T-cell (primary cell): ENCODE measurements at regions of chr6 and their contacts with region 1.

Region 1: DNA sequence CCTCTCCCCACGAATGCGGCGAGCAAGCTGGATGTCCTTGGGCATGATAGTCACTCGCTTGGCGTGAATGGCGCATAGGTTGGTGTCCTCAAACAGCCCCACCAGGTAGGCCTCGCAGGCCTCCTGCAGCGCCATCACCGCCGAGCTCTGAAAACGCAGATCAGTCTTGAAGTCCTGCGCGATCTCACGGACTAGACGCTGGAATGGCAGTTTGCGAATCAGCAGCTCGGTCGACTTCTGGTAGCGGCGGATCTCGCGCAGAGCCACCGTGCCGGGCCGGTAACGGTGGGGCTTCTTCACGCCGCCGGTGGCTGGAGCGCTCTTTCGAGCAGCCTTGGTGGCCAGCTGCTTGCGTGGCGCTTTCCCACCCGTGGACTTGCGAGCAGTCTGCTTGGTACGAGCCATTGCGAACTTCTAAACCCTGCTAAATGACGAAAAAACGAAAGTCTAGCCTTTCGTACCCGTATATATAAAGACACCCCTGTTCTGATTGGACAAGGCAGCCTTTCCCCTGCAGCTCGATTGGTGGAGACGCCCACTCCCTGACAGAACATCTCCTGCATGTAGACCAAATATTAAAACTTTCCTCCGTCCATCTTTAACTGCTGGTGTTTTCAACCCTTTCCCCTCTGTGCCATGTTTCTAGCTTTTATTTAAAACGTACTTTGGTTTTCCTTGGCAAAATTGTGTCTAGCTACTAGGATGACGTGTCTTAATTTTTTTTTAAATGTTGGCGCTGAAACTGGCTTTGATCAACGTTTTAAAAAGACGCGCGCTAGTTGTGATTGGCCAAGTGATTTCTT is 109.8 kb downstream of the HFE start:
- DNase-seq: peak; percentile 55 to 93 (median 81)
- ATAC-seq: peak; percentile 58 to 66 (median 61)
- H3K4me3 ChIP-seq: peak overlapping the region; percentile 79 to 99
- H3K4me3 Mint-ChIP-seq: peak overlapping the region; percentile 95 to 98 (median 97)
- H3K27ac ChIP-seq: peak overlapping the region; percentile 85
- H3K27ac Mint-ChIP-seq: peak overlapping the region; percentile 93 to 98
- H3K4me1 ChIP-seq: peaks cover 13 to 30% of the 10 kb centered on the region in 2 experiments
- H3K4me1 Mint-ChIP-seq: peaks cover 38 to 60% (median 46%) of the 10 kb centered on the region in 3 donors
- H3K27me3 ChIP-seq: no peaks in the 10 kb centered on the region
- H3K27me3 Mint-ChIP-seq: no peaks in the 10 kb centered on the region

Region 2: GRCh38 chr6:25612666-25613065 is 584.4 kb before region 1 on chr6:
- CTCF ChIA-PET with region 1: no interaction called
- POLR2A ChIA-PET with region 1: no interaction called
- DNase-seq: no peak
- ATAC-seq: no peak
- H3K4me3 ChIP-seq: no peak overlapping the region
- H3K4me3 Mint-ChIP-seq: no peak overlapping the region
- H3K27ac ChIP-seq: no peak overlapping the region
- H3K27ac Mint-ChIP-seq: no peak overlapping the region
- H3K4me1 ChIP-seq: no peaks in the 10 kb centered on the region
- H3K4me1 Mint-ChIP-seq: no peaks in the 10 kb centered on the region
- H3K27me3 ChIP-seq: no peaks in the 10 kb centered on the region
- H3K27me3 Mint-ChIP-seq: no peaks in the 10 kb centered on the region

Region 3: GRCh38 chr6:26045065-26045927 is 151.8 kb before region 1 on chr6:
- CTCF ChIA-PET with region 1: no interaction called
- POLR2A ChIA-PET with region 1: interaction called, 9 to 52 read pairs
- DNase-seq: peak; percentile 45 to 90 (median 78)
- ATAC-seq: peak; percentile 63 to 66 (median 64)
- H3K4me3 ChIP-seq: peak overlapping the region; percentile 77 to 83
- H3K4me3 Mint-ChIP-seq: peak overlapping the region; percentile 84 to 91 (median 90)
- H3K27ac ChIP-seq: peak overlapping the region; percentile 90
- H3K27ac Mint-ChIP-seq: peak overlapping the region; percentile 98
- H3K4me1 ChIP-seq: peaks cover 5 to 26% of the 10 kb centered on the region in 2 experiments
- H3K4me1 Mint-ChIP-seq: peaks cover 15 to 27% (median 26%) of the 10 kb centered on the region in 3 donors
- H3K27me3 ChIP-seq: no peaks in the 10 kb centered on the region
- H3K27me3 Mint-ChIP-seq: no peaks in the 10 kb centered on the region

Region 4: GRCh38 chr6:26175428-26176181 is 21.4 kb before region 1 on chr6:
- CTCF ChIA-PET with region 1: interaction called, 3 to 36 read pairs
- POLR2A ChIA-PET with region 1: interaction called, 17 to 53 read pairs
- DNase-seq: peak in 24 of 35 experiments; percentile 30 to 85 (median 50)
- ATAC-seq: no peak
- H3K4me3 ChIP-seq: no peak overlapping the region
- H3K4me3 Mint-ChIP-seq: peak overlapping the region in 1 of 3 donors; percentile 5
- H3K27ac ChIP-seq: peak overlapping the region; percentile 37
- H3K27ac Mint-ChIP-seq: peak overlapping the region; percentile 58 to 73
- H3K4me1 ChIP-seq: peaks cover 11 to 15% of the 10 kb centered on the region in 2 experiments
- H3K4me1 Mint-ChIP-seq: peaks cover 36 to 39% (median 37%) of the 10 kb centered on the region in 3 donors
- H3K27me3 ChIP-seq: no peaks in the 10 kb centered on the region
- H3K27me3 Mint-ChIP-seq: no peaks in the 10 kb centered on the region

Region 5: GRCh38 chr6:26234421-26235296 is 37.6 kb after region 1 on chr6:
- CTCF ChIA-PET with region 1: interaction called in 1 of 2 experiments, 10 read pairs
- POLR2A ChIA-PET with region 1: interaction called, 33 to 154 read pairs
- DNase-seq: peak; percentile 52 to 83 (median 66)
- ATAC-seq: peak; percentile 66 to 78 (median 76)
- H3K4me3 ChIP-seq: peak overlapping the region; percentile 88 to 98
- H3K4me3 Mint-ChIP-seq: peak overlapping the region; percentile 87 to 96 (median 88)
- H3K27ac ChIP-seq: peak overlapping the region; percentile 95
- H3K27ac Mint-ChIP-seq: peak overlapping the region; percentile 96 to 100
- H3K4me1 ChIP-seq: peaks cover 13 to 19% of the 10 kb centered on the region in 2 experiments
- H3K4me1 Mint-ChIP-seq: peaks cover 32 to 39% (median 36%) of the 10 kb centered on the region in 3 donors
- H3K27me3 ChIP-seq: no peaks in the 10 kb centered on the region
- H3K27me3 Mint-ChIP-seq: no peaks in the 10 kb centered on the region

Region 6: DNA sequence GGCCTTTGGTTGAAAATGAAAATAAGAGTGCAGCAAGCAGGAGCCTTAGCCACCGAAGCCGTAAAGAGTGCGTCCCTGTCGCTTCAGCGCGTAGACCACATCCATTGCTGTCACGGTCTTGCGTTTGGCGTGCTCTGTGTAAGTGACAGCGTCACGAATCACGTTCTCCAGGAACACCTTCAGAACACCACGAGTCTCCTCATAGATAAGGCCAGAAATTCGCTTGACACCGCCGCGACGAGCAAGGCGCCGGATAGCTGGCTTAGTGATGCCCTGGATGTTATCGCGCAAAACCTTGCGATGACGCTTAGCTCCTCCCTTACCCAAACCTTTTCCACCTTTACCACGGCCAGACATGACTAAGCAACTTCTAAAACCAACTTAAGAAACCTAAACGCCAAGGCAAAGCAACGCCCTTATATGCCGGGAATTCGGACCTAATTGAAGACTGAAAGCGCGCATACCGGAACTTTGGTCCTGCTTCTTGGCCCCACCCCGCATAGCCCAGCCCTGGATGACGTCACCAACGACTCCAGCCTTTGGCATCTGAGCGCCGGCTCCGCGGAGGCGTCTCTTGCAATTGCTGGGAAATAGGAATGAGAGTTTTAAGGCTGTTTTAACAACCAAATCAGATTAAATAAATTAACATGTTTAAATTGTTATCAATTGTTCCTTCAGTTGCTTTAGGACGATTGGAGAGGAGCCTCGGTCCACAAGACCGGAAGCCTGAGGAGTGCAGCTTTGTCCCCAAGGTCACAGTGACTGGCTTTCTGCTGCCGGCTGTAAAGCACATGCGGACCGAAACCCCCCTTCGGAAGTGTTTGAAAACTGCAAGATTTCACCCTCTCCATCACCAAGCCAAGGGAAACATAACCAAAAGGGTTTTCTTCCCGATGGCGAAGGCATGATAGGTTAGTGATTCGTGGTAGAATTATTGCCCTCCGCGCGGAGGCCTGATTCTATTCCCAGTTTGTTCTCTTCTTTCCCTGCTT is 88.4 kb after region 1 on chr6:
- CTCF ChIA-PET with region 1: no interaction called
- POLR2A ChIA-PET with region 1: interaction called, 9 to 28 read pairs
- DNase-seq: peak; percentile 86 to 97 (median 91)
- ATAC-seq: peak; percentile 77 to 87 (median 80)
- H3K4me3 ChIP-seq: peak overlapping the region; percentile 50 to 84
- H3K4me3 Mint-ChIP-seq: peak overlapping the region; percentile 84 to 92 (median 88)
- H3K27ac ChIP-seq: peak overlapping the region; percentile 81
- H3K27ac Mint-ChIP-seq: peak overlapping the region; percentile 92 to 93
- H3K4me1 ChIP-seq: peaks cover 14 to 19% of the 10 kb centered on the region in 2 experiments
- H3K4me1 Mint-ChIP-seq: peaks cover 30 to 41% (median 31%) of the 10 kb centered on the region in 3 donors
- H3K27me3 ChIP-seq: no peaks in the 10 kb centered on the region
- H3K27me3 Mint-ChIP-seq: peaks cover 4 to 5% of the 10 kb centered on the region in 2 donors

Region 7: GRCh38 chr6:27838058-27838944 is 1641.3 kb after region 1 on chr6:
- CTCF ChIA-PET with region 1: no interaction called
- POLR2A ChIA-PET with region 1: interaction called in 1 of 2 experiments, 10 read pairs
- DNase-seq: peak; percentile 62 to 97 (median 79)
- ATAC-seq: peak; percentile 80 to 83 (median 82)
- H3K4me3 ChIP-seq: peak overlapping the region; percentile 86 to 87
- H3K4me3 Mint-ChIP-seq: no peak overlapping the region
- H3K27ac ChIP-seq: peak overlapping the region; percentile 99
- H3K27ac Mint-ChIP-seq: no peak overlapping the region
- H3K4me1 ChIP-seq: peaks cover 14 to 28% of the 10 kb centered on the region in 2 experiments
- H3K4me1 Mint-ChIP-seq: peaks cover 9 to 20% (median 9%) of the 10 kb centered on the region in 3 donors
- H3K27me3 ChIP-seq: peaks cover 0 to 8% of the 10 kb centered on the region in 2 experiments
- H3K27me3 Mint-ChIP-seq: peaks cover 4 to 7% of the 10 kb centered on the region in 2 donors